ENCODE measurements at regions of chr5 and their contacts with region 1.

Region 1: DNA sequence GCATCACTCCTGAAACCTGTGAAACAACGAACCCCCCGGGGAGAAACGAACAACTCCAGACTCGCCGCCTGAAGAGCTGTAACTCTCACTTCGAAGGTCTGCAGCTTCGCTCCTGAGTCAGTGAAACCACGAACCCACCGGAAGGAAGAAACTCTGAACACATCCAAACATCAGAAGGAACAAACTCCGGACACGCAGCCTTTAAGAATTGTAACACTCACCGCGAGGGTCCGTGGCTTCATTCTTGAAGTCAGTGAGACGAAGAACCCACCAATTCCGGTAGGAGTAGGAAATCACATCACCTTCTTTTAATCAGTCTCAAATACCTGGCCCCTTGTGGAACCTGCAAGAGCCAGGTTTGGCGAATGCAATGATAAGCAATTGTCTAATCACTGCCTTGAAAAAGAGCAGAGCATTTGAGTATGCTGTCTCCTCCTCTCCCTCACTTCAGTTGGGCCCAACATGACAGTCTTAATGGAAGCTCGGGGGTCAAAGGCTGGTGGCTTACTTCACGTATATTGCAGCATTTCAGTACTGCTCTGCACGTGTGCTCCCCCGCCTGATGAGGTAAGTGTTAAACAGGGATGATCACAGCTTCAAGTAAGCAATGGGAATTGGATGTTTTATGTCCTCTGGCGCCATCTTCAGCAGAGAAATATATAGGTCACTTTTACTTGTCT is 473 bp downstream of the IRGM start:
- DNase-seq: peak in 4 of 5 donors; percentile 31 to 56 (median 48)
- ATAC-seq: peak; percentile 73 to 91 (median 90)
- H3K4me3 ChIP-seq: peak overlapping the region in 1 of 12 donors; percentile 6
- H3K27ac ChIP-seq: no peak overlapping the region
- H3K4me1 ChIP-seq: peaks cover 0 to 7% (median 0%) of the 10 kb centered on the region in 12 donors
- H3K27me3 ChIP-seq: peaks cover 0 to 4% (median 0%) of the 10 kb centered on the region in 9 donors
- CTCF ChIP-seq: peak; percentile 38 to 80 (median 68)
- POLR2A ChIP-seq: no peak

Region 2: GRCh38 chr5:150449517-150450339 is 397.1 kb before region 1 on chr5 and contains the start of gene RPS14:
- intact Hi-C with region 1: loop called in 2 of 10 experiments (anchors 10 kb)
- DNase-seq: peak; percentile 93 to 96 (median 95)
- ATAC-seq: peak; percentile 96 to 98 (median 97)
- H3K4me3 ChIP-seq: peak within 1 kb of the TSS; percentile 75 to 90 (median 83)
- H3K27ac ChIP-seq: peak within 1 kb of the TSS; percentile 89 to 99 (median 96)
- H3K4me1 ChIP-seq: peaks cover 0 to 37% (median 16%) of the 10 kb centered on the region in 12 donors
- H3K27me3 ChIP-seq: no peaks in the 10 kb centered on the region
- CTCF ChIP-seq: peak; percentile 79 to 99 (median 94)
- POLR2A ChIP-seq: peak in 1 of 2 donors; percentile 84
- total RNA-seq, gene RPS14: 1,031 to 1,428 (median 1,294) TPM

Region 3: DNA sequence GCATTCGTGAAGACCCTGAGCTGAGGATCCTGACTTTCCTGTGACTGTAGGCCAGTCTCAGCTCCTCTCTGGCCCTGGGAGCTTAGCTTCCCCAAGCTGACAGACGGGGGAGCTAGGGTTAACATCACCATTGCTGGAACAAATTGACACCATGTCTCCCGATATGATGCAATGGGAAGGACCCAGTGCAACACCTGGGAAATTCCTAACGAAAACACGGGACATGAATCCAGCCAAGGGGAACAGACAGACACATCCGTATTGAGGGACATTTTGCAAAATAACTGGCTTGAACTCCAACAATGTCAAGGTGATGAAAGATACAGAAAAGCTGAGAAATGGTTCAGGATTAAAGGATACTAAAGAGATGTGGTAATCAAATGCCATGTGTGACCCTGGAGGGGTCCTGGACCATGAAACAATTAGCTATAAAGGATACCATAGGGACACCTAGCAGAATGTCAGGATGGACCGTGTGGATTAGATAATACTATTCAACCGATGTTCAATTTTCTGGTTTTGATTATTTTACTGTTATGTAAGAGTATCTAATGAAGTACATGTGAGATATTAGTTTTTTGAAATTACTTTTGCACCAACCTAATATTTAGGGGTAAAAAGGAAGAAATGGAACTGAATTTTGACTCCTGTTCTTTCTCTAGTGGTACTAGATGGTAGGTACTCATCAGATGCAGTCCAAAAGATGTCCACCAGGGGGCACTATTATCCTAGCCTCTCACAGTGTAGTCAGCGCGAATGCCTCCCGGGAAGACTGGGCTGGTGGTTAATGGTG is 286.2 kb before region 1 on chr5:
- intact Hi-C with region 1: loop called (anchors 2 to 5 kb)
- DNase-seq: peak in 4 of 5 donors; percentile 81 to 86 (median 84)
- ATAC-seq: peak; percentile 74 to 90 (median 86)
- H3K4me3 ChIP-seq: no peak overlapping the region
- H3K27ac ChIP-seq: no peak overlapping the region
- H3K4me1 ChIP-seq: peaks cover 0 to 20% (median 4%) of the 10 kb centered on the region in 12 donors
- H3K27me3 ChIP-seq: no peaks in the 10 kb centered on the region
- CTCF ChIP-seq: peak; percentile 83 to 98 (median 96)
- POLR2A ChIP-seq: no peak

Region 4: DNA sequence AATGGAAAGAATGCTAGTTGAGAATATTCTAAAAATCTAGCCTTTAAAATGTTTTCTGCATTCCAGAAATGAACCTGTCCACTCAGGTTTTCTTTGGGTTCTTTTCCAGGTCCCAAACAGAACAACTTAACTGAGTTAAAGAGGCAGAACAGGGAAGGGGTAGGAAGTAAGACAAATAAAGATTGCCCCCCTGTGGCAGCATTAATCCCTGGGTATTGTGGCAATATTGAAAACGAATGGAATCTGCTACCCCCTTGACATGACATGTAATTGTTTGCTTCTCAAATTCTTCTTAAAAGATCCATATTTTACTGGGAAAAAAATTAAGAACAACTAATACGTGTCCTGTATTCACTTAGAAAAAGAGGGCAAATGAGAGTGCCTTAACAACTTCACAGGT is 136.6 kb before region 1 on chr5:
- intact Hi-C with region 1: loop called in 5 of 10 experiments (anchors 10 kb)
- DNase-seq: no peak
- ATAC-seq: no peak
- H3K4me3 ChIP-seq: no peak overlapping the region
- H3K27ac ChIP-seq: no peak overlapping the region
- H3K4me1 ChIP-seq: peaks cover 0 to 8% (median 0%) of the 10 kb centered on the region in 12 donors
- H3K27me3 ChIP-seq: no peaks in the 10 kb centered on the region
- CTCF ChIP-seq: peak in 11 of 12 donors; percentile 9 to 50 (median 28)
- POLR2A ChIP-seq: no peak

Region 5: DNA sequence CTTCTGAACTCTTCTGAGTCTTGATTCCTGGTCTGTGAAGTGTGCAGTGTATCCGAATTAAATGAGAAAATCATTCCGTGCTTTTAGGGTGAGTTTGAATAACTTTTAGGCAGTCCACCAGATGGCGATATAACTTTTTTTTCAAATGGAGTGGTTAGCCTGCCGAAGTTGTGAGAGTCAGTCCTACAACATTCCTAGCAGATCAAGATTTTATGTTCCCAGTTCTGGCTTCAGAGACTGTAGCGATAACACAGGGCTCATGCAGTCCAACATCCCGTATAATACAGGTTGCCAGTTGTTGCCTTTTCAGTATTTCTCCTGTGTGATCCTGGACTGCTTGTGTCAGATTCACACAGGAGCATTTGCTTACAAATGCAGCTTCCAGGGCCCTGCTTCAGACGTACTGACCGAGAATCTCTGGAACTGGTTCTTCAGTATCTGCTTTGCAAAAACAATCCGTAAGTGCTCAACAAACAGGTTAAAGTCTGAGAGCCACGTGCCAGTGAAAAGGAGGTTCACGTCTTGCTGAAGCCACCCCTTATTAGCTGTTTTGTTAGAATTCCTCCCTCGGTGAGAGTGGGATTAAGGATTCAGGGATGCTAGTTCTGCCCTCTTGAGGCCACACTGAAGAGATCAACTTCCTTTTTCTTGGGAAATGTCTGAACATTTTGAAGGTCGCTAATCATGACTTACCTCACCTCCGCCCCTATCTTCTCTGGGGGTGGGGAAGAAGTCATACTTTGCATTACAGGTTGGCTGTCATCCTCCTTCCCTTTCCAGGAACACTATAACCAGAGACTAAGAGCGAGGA is 45.5 kb before region 1 on chr5:
- intact Hi-C with region 1: loop called in 8 of 10 experiments (anchors 2 to 5 kb)
- DNase-seq: peak in 2 of 5 donors; percentile 24 to 28
- ATAC-seq: peak; percentile 67 to 87 (median 86)
- H3K4me3 ChIP-seq: peak overlapping the region in 11 of 12 donors; percentile 3 to 56 (median 41)
- H3K27ac ChIP-seq: peak overlapping the region in 10 of 12 donors; percentile 2 to 72 (median 52)
- H3K4me1 ChIP-seq: peaks cover 0 to 10% (median 0%) of the 10 kb centered on the region in 12 donors
- H3K27me3 ChIP-seq: no peaks in the 10 kb centered on the region
- CTCF ChIP-seq: peak in 11 of 12 donors; percentile 28 to 62 (median 47)
- POLR2A ChIP-seq: no peak

Region 6: GRCh38 chr5:150816946-150817345 is 29.8 kb before region 1 on chr5:
- intact Hi-C with region 1: loop called in 1 of 10 experiments (anchors 2 kb)
- DNase-seq: no peak
- ATAC-seq: no peak
- H3K4me3 ChIP-seq: no peak overlapping the region
- H3K27ac ChIP-seq: no peak overlapping the region
- H3K4me1 ChIP-seq: no peaks in the 10 kb centered on the region
- H3K27me3 ChIP-seq: no peaks in the 10 kb centered on the region
- CTCF ChIP-seq: no peak
- POLR2A ChIP-seq: no peak

Region 7: GRCh38 chr5:150987746-150988145 is 141.0 kb after region 1 on chr5:
- intact Hi-C with region 1: no loop called
- DNase-seq: no peak
- ATAC-seq: no peak
- H3K4me3 ChIP-seq: no peak overlapping the region
- H3K27ac ChIP-seq: no peak overlapping the region
- H3K4me1 ChIP-seq: no peaks in the 10 kb centered on the region
- H3K27me3 ChIP-seq: no peaks in the 10 kb centered on the region
- CTCF ChIP-seq: no peak
- POLR2A ChIP-seq: no peak